ENCODE measurements at regions of chr2 and their contacts with region 1.

Region 1: DNA sequence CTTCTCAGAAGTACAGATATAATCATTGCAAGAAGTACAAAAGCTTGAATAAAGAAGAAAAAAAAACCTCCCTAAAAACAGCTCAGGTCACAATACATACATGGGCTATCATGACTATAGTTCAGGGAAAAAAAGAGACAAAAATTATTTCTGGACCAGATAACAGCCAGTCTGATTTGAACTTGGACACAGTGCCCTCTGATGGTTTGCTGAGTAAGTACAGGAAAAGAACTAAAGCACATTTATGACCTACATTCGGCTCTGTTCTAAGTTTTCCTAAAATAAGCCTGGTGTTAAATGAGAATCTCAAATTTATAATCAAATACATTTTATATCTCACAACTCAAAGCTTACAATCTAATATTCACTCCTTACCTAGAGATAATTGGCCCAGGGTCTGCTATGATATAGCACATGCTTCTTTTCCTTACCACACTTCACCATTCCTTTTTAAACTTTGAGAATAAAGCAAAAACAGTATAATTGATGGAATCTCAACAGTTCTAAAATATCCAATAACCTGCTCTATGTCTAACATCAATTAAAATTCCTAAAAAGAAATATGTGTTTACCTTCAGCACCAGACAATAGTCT is 81.1 kb downstream of the RAPH1 start:
- DNase-seq: peak; percentile 22
- H3K4me3 Mint-ChIP-seq: no peak overlapping the region
- H3K27ac Mint-ChIP-seq: no peak overlapping the region
- H3K4me1 Mint-ChIP-seq: peaks cover 3% of the 10 kb centered on the region
- H3K27me3 Mint-ChIP-seq: no peaks in the 10 kb centered on the region

Region 2: GRCh38 chr2:202574541-202574940 is 879.4 kb before region 1 on chr2:
- CTCF ChIA-PET with region 1: interaction called, 3 read pairs
- POLR2A ChIA-PET with region 1: no interaction called
- intact Hi-C with region 1: loop called (anchors 5 kb)
- DNase-seq: no peak
- H3K4me3 Mint-ChIP-seq: no peak overlapping the region
- H3K27ac Mint-ChIP-seq: no peak overlapping the region
- H3K4me1 Mint-ChIP-seq: no peaks in the 10 kb centered on the region
- H3K27me3 Mint-ChIP-seq: no peaks in the 10 kb centered on the region

Region 3: DNA sequence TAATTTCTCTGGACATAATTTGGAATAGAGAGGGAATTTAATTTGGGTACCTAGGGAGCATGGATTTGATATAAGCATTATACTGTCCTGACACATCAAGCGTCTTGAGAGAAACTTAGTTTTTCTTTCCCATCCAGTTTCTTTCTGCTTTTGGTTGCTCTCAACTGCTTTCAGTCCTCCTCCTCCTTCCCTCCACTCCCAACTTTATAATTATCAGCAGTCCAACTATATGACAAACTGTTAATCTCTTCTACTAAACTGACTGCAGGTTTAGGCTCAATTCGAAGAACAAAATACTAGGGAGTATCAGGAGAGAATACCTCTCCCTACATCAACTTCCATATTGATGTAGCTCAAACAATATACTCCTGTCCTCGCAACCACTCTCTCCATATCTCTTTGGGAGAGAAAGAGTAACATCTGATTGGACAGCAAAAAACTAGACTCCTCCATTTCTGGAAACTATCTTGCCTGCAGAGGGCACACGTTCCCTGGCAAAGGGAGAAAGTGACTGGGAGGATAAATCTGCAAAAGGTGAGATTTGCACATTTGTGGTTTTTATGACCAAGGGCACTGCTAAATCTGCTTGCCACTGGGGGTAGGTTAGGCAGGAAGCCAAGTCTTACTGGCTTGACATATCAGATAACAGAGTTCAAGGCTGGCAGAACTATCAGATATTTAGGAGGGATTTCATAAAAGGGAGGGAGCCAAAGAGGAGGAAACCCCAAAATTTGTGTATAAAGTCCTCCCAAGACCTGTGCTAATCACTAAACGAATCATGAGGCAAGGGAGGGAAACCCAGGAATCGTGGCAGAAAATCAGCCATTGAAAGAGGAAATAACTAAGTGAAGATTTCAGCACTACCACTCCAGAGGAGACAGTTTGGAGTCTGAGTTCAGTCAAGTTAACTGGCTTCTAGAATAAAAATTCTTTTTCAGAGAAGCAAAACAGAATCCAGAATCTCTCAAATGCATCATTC is 622.4 kb before region 1 on chr2:
- CTCF ChIA-PET with region 1: no interaction called
- POLR2A ChIA-PET with region 1: no interaction called
- intact Hi-C with region 1: loop called (anchors 1 kb)
- DNase-seq: peak; percentile 70
- H3K4me3 Mint-ChIP-seq: no peak overlapping the region
- H3K27ac Mint-ChIP-seq: no peak overlapping the region
- H3K4me1 Mint-ChIP-seq: peaks cover 15% of the 10 kb centered on the region
- H3K27me3 Mint-ChIP-seq: no peaks in the 10 kb centered on the region

Region 4: GRCh38 chr2:203225423-203226039 is 228.4 kb before region 1 on chr2:
- CTCF ChIA-PET with region 1: interaction called, 7 read pairs
- POLR2A ChIA-PET with region 1: no interaction called
- intact Hi-C with region 1: loop called (anchors 5 kb)
- DNase-seq: peak; percentile 38
- H3K4me3 Mint-ChIP-seq: no peak overlapping the region
- H3K27ac Mint-ChIP-seq: no peak overlapping the region
- H3K4me1 Mint-ChIP-seq: no peaks in the 10 kb centered on the region
- H3K27me3 Mint-ChIP-seq: no peaks in the 10 kb centered on the region

Region 5: GRCh38 chr2:203527719-203528118 is 73.8 kb after region 1 on chr2:
- CTCF ChIA-PET with region 1: no interaction called
- POLR2A ChIA-PET with region 1: no interaction called
- intact Hi-C with region 1: no loop called
- DNase-seq: no peak
- H3K4me3 Mint-ChIP-seq: no peak overlapping the region
- H3K27ac Mint-ChIP-seq: no peak overlapping the region
- H3K4me1 Mint-ChIP-seq: peaks cover 9% of the 10 kb centered on the region
- H3K27me3 Mint-ChIP-seq: peaks cover 3% of the 10 kb centered on the region

Region 6: GRCh38 chr2:203543898-203544328 is 90.0 kb after region 1 on chr2:
- CTCF ChIA-PET with region 1: no interaction called
- POLR2A ChIA-PET with region 1: no interaction called
- intact Hi-C with region 1: no loop called
- DNase-seq: no peak
- H3K4me3 Mint-ChIP-seq: no peak overlapping the region
- H3K27ac Mint-ChIP-seq: no peak overlapping the region
- H3K4me1 Mint-ChIP-seq: peaks cover 10% of the 10 kb centered on the region
- H3K27me3 Mint-ChIP-seq: no peaks in the 10 kb centered on the region

Region 7: GRCh38 chr2:203928849-203929248 is 474.9 kb after region 1 on chr2:
- CTCF ChIA-PET with region 1: no interaction called
- POLR2A ChIA-PET with region 1: no interaction called
- intact Hi-C with region 1: no loop called
- DNase-seq: no peak
- H3K4me3 Mint-ChIP-seq: no peak overlapping the region
- H3K27ac Mint-ChIP-seq: no peak overlapping the region
- H3K4me1 Mint-ChIP-seq: peaks cover 42% of the 10 kb centered on the region
- H3K27me3 Mint-ChIP-seq: peaks cover 2% of the 10 kb centered on the region

Measured in activated CD4-positive, alpha-beta memory T cell treated with anti-CD3 and anti-CD28 coated beads for 36 hours (primary cell).